Caco-2 (cell line): ENCODE measurements at regions of chr6 and their contacts with region 1.

Region 1: DNA sequence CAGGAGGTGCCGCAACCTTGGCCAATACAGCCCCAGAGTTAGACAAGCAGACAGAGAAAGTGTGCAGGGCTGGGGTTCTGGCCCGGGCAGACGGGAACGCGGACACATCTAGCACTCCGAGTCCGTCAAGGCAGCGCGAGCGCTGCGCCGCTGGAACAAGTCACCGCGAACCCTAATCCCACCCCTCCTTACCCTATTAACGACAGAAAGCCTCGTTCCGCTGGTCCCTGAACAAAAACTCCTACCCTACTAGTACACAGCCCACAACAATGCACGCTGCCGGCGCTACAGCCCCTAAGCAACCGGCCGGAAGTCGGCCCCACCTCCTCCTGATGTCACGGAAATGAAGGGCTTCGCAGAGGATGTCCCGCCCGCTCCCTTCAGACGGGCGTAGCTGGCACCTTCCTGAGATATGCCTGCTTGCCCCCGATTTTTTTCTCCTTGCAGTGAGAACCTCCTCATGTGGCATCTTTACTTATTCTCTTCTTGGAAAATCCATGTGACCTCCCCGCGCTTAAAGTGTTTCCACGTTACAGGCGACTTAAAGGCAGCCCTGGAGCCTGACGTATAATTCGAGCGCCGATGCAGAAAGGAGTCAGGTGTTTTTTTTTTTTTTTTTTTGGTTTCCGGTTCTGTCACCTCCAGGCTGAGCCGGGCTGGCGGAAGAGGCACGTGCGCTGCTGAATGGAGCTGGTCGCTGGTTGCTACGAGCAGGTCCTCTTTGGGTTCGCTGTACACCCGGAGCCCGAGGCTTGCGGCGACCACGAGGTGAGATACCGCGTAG is at the starts of genes C6orf52 and PAK1IP1:
- DNase-seq: peak; percentile 93
- H3K4me3 ChIP-seq: peak within 1 kb of the TSS; percentile 46
- H3K4me3 Mint-ChIP-seq: peak within 1 kb of the TSS; percentile 86
- H3K27ac Mint-ChIP-seq: peak within 1 kb of the TSS; percentile 99
- H3K4me1 ChIP-seq: peaks cover 7% of the 10 kb centered on the region; the same call in 1 of the 2 replicates
- H3K4me1 Mint-ChIP-seq: no peaks in the 10 kb centered on the region
- H3K27me3 ChIP-seq: no peaks in the 10 kb centered on the region
- H3K27me3 Mint-ChIP-seq: no peaks in the 10 kb centered on the region
- CTCF ChIP-seq: no peak
- total RNA-seq, gene C6orf52: 3.1 and 4.3 TPM in 2 replicates
- total RNA-seq, gene PAK1IP1: 23.9 and 25.9 TPM in 2 replicates

Region 2: GRCh38 chr6:10521104-10521808 is 173.2 kb before region 1 on chr6 and contains the start of gene GCNT2:
- CTCF ChIA-PET with region 1: no interaction called
- POLR2A ChIA-PET with region 1: interaction called, 21 read pairs
- intact Hi-C with region 1: no loop called
- DNase-seq: peak; percentile 85 to 90
- H3K4me3 ChIP-seq: peak within 1 kb of the TSS; percentile 33
- H3K4me3 Mint-ChIP-seq: peak within 1 kb of the TSS; percentile 85
- H3K27ac Mint-ChIP-seq: peak within 1 kb of the TSS; percentile 90
- H3K4me1 ChIP-seq: peaks cover 33% of the 10 kb centered on the region
- H3K4me1 Mint-ChIP-seq: peaks cover 27% of the 10 kb centered on the region
- H3K27me3 ChIP-seq: no peaks in the 10 kb centered on the region
- H3K27me3 Mint-ChIP-seq: no peaks in the 10 kb centered on the region
- CTCF ChIP-seq: no peak
- total RNA-seq, gene GCNT2: 68.1 and 70.7 TPM in 2 replicates

Region 3: DNA sequence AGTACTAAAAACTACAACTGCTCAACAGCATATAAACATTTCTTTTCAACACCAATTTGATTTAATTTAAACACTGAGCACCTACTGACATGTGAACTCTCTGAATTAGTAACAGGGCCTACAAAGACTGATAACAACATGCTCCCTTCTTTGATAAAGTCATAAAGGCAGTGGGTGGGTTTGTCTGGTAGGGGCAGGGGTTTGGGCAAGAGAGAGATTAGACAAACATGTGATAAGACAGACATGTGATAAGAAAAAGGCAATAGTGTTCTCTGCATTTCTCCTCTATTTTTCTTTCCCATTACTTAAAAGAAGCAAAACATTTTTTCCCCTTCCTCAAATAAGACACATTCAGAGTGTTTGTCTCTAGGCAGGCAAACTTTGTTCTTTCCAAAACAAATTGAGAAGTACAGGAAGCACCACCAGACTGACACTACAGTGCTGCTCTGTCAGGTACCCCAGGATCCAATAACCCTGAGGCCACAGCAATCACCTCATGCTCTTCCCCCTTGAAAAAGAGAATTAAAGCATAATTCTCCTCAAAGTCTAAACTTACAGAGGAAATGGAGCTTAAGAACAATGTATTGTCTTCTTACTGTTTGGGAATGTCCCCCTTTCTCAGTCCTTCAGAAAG is 12.0 kb before region 1 on chr6:
- CTCF ChIA-PET with region 1: no interaction called
- POLR2A ChIA-PET with region 1: no interaction called
- intact Hi-C with region 1: no loop called
- DNase-seq: peak in 1 of 2 experiments; percentile 18
- H3K4me3 ChIP-seq: no peak overlapping the region
- H3K4me3 Mint-ChIP-seq: peak overlapping the region; percentile 10
- H3K27ac Mint-ChIP-seq: peak overlapping the region; percentile 10
- H3K4me1 ChIP-seq: peaks cover 13% of the 10 kb centered on the region
- H3K4me1 Mint-ChIP-seq: peaks cover 25% of the 10 kb centered on the region
- H3K27me3 ChIP-seq: no peaks in the 10 kb centered on the region
- H3K27me3 Mint-ChIP-seq: no peaks in the 10 kb centered on the region
- CTCF ChIP-seq: no peak

Region 4: DNA sequence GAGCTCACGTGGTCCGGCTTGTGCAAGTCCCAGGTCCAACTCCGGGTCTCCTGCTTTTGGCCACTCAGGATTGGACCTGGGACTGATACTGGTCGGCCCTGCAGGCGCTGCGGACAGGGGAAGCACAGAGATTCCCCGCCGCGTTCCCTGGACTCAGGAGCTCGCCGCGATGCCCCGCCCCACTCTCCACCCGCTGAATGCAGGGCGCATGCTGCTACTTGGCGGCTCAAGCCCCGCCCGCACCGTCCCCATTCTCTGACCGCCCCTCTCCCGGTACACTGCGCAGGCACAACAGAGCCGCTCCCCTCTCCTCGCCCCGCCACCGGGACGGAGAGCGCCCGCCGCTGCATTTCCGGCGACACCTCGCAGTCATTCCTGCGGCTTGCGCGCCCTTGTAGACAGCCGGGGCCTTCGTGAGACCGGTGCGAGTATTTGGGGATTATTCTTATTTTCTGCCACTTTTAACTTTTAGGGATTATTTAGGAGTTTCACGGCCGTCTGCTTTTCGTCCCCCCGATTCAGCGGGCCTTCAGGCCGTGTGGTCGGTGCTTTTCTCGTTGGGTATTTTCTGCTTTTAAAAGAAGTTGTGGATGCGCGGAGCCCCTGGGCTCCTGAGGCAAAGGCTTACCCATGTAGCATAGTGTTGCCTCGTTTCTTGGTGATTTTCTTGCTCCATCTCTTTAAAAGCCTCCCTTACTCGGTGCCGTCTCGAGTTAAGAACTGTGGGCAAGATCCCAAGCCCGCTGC is 28.5 kb after region 1 on chr6 and contains the start of gene TMEM14C:
- CTCF ChIA-PET with region 1: interaction called, 7 read pairs
- POLR2A ChIA-PET with region 1: interaction called, 17 read pairs
- intact Hi-C with region 1: loop called (anchors 1 kb)
- DNase-seq: peak; percentile 99
- H3K4me3 ChIP-seq: peak within 1 kb of the TSS; percentile 68
- H3K4me3 Mint-ChIP-seq: peak within 1 kb of the TSS; percentile 96
- H3K27ac Mint-ChIP-seq: peak within 1 kb of the TSS; percentile 97
- H3K4me1 ChIP-seq: peaks cover 6% of the 10 kb centered on the region
- H3K4me1 Mint-ChIP-seq: peaks cover 15% of the 10 kb centered on the region
- H3K27me3 ChIP-seq: no peaks in the 10 kb centered on the region
- H3K27me3 Mint-ChIP-seq: no peaks in the 10 kb centered on the region
- CTCF ChIP-seq: no peak
- total RNA-seq, gene TMEM14C: 116 and 134 TPM in 2 replicates

Region 5: GRCh38 chr6:10759312-10759839 is 64.9 kb after region 1 on chr6:
- CTCF ChIA-PET with region 1: no interaction called
- POLR2A ChIA-PET with region 1: interaction called, 10 read pairs
- intact Hi-C with region 1: no loop called
- DNase-seq: peak; percentile 46 to 68
- H3K4me3 ChIP-seq: no peak overlapping the region
- H3K4me3 Mint-ChIP-seq: no peak overlapping the region
- H3K27ac Mint-ChIP-seq: peak overlapping the region; percentile 80
- H3K4me1 ChIP-seq: peaks cover 4% of the 10 kb centered on the region; the same call in 1 of the 2 replicates
- H3K4me1 Mint-ChIP-seq: peaks cover 6% of the 10 kb centered on the region
- H3K27me3 ChIP-seq: no peaks in the 10 kb centered on the region
- H3K27me3 Mint-ChIP-seq: no peaks in the 10 kb centered on the region
- CTCF ChIP-seq: peak; percentile 42 to 44